ENCODE measurements at regions of chr16 and their contacts with region 1.

Region 1: DNA sequence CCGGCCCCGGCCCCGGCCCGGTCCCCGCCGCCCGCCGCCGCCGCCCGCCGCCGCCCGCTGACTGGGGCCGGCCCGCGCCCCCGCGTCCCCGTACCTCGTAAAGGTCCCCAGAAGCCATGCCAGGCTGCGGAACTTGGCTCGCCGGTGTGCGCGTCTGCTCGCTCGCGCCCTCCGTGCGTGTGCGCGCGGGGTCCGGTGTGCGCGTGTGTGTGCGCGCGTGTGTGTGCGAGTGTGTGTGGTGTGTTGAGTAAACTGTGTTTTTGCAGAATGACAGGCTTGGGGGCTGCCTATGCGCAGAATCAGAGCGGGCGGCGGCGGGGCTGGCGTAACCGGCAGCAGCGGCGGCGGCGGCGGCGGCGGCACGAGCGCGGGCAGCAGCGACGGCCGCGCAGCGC is 345 bp downstream of the CDYL2 start:
- DNase-seq: peak; percentile 51
- H3K4me3 ChIP-seq: peak overlapping the region; percentile 43 to 93 (median 50)
- H3K27ac ChIP-seq: peak overlapping the region; percentile 70
- H3K4me1 ChIP-seq: peaks cover 35% of the 10 kb centered on the region
- H3K27me3 ChIP-seq: no peaks in the 10 kb centered on the region
- CTCF ChIP-seq: no peak
- POLR2A ChIP-seq: no peak

Region 2: DNA sequence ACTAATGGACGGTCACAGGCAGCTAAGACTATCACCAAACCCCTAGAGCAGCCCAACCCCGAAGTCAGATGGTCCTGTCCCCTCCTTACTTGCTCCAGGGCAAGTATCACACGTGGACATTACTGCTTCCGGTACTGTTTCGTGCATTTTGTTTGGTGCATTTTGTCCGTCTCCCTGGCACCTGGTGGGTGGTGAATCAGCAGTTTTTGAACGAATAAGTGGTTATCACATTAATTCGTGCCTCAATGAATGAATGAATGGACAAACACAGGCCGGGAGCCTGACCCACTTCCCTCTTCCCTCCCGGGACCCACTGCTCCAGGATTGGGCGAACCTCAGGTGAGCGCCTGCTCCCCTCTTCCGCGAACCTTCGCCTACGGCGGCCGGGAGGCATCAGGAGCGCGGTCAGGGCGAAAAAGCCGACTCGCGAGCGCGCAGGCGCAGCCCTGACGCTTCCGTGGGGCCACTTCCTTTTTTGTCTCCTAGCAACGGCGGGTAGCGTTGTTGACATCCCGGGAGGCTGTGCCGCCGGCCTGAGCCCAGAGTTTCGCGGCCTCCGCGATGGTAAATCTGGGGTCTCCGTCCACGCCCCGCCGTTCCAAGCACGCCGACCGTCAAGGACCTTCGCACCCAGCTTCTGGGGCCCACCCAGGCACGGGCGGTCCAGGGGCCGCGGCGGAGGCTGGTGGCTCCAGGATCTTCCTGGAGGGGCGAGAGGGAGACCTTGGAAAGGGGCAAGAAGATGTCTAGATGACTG is 263.4 kb before region 1 on chr16 and contains the start of gene DYNLRB2:
- CTCF ChIA-PET with region 1: no interaction called
- POLR2A ChIA-PET with region 1: no interaction called
- dilution Hi-C with region 1: no loop called
- intact Hi-C with region 1: loop called (anchors 1 kb)
- DNase-seq: peak; percentile 89
- H3K4me3 ChIP-seq: peak within 1 kb of the TSS; percentile 55 to 84 (median 61)
- H3K27ac ChIP-seq: peak within 1 kb of the TSS; percentile 59
- H3K4me1 ChIP-seq: peaks cover 10% of the 10 kb centered on the region
- H3K27me3 ChIP-seq: peaks cover 2 to 22% of the 10 kb centered on the region in 2 experiments
- CTCF ChIP-seq: no peak
- POLR2A ChIP-seq: peak; percentile 66
- total RNA-seq, gene DYNLRB2: not detected in 2 replicates

Region 3: DNA sequence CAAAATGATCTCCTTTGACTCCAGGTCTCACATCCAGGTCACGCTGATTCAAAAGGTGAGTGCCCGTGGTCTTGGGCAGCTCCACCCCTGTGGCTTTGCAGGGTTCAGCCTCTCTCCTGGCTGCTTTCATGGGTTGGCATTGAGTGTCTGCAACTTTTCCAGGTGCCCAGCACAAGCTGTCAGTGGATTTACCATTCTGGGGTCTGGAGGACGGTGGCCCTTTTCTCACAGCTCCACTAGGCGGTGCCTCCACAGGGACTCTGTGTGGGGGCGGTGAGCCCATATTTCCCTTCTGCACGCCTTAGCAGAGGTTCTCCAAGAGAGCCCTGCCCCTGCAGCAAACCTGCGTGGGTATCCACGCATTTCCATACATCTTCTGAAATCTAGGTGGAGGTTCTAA is 160.8 kb before region 1 on chr16:
- CTCF ChIA-PET with region 1: no interaction called
- POLR2A ChIA-PET with region 1: no interaction called
- dilution Hi-C with region 1: no loop called
- intact Hi-C with region 1: no loop called
- DNase-seq: no peak
- H3K4me3 ChIP-seq: no peak overlapping the region
- H3K27ac ChIP-seq: no peak overlapping the region
- H3K4me1 ChIP-seq: no peaks in the 10 kb centered on the region
- H3K27me3 ChIP-seq: no peaks in the 10 kb centered on the region
- CTCF ChIP-seq: no peak
- POLR2A ChIP-seq: no peak

Region 4: GRCh38 chr16:80718249-80719220 is 85.5 kb before region 1 on chr16:
- CTCF ChIA-PET with region 1: no interaction called
- POLR2A ChIA-PET with region 1: no interaction called
- dilution Hi-C with region 1: no loop called
- intact Hi-C with region 1: loop called (anchors 2 kb)
- DNase-seq: peak; percentile 91
- H3K4me3 ChIP-seq: no peak overlapping the region
- H3K27ac ChIP-seq: peak overlapping the region; percentile 51
- H3K4me1 ChIP-seq: peaks cover 32% of the 10 kb centered on the region
- H3K27me3 ChIP-seq: no peaks in the 10 kb centered on the region
- CTCF ChIP-seq: no peak
- POLR2A ChIP-seq: no peak

Region 5: DNA sequence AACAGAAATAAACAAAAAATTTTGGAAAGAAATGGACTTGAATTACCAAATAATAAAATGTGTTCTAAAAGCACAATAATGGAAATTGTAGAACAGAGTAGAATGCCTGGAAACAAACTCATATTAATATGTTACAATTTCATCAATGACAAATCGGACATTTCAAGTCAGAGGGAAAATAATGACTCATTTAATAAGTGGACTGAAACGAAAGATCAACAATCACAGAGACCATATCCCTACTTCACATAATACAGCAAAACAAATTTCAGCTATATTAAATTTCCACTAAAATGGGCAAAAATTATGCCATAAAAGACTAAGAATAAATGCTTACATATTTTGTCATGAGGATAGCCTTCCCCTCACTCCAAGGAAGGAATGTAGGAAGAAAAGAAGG is 25.3 kb before region 1 on chr16:
- CTCF ChIA-PET with region 1: interaction called, 3 read pairs
- POLR2A ChIA-PET with region 1: no interaction called
- dilution Hi-C with region 1: no loop called
- intact Hi-C with region 1: loop called (anchors 2 kb)
- DNase-seq: peak; percentile 63
- H3K4me3 ChIP-seq: peak overlapping the region in 2 of 3 experiments; percentile 37 to 43
- H3K27ac ChIP-seq: peak overlapping the region; percentile 69
- H3K4me1 ChIP-seq: peaks cover 21% of the 10 kb centered on the region
- H3K27me3 ChIP-seq: no peaks in the 10 kb centered on the region
- CTCF ChIP-seq: no peak
- POLR2A ChIP-seq: no peak

Region 6: GRCh38 chr16:80931801-80932712 is 128.0 kb after region 1 on chr16:
- CTCF ChIA-PET with region 1: no interaction called
- POLR2A ChIA-PET with region 1: no interaction called
- dilution Hi-C with region 1: no loop called
- intact Hi-C with region 1: loop called (anchors 1 kb)
- DNase-seq: peak; percentile 59
- H3K4me3 ChIP-seq: peak overlapping the region; percentile 42 to 86 (median 63)
- H3K27ac ChIP-seq: peak overlapping the region; percentile 98
- H3K4me1 ChIP-seq: peaks cover 29% of the 10 kb centered on the region
- H3K27me3 ChIP-seq: no peaks in the 10 kb centered on the region
- CTCF ChIP-seq: peak; percentile 6 to 15
- POLR2A ChIP-seq: peak; percentile 83

Region 7: DNA sequence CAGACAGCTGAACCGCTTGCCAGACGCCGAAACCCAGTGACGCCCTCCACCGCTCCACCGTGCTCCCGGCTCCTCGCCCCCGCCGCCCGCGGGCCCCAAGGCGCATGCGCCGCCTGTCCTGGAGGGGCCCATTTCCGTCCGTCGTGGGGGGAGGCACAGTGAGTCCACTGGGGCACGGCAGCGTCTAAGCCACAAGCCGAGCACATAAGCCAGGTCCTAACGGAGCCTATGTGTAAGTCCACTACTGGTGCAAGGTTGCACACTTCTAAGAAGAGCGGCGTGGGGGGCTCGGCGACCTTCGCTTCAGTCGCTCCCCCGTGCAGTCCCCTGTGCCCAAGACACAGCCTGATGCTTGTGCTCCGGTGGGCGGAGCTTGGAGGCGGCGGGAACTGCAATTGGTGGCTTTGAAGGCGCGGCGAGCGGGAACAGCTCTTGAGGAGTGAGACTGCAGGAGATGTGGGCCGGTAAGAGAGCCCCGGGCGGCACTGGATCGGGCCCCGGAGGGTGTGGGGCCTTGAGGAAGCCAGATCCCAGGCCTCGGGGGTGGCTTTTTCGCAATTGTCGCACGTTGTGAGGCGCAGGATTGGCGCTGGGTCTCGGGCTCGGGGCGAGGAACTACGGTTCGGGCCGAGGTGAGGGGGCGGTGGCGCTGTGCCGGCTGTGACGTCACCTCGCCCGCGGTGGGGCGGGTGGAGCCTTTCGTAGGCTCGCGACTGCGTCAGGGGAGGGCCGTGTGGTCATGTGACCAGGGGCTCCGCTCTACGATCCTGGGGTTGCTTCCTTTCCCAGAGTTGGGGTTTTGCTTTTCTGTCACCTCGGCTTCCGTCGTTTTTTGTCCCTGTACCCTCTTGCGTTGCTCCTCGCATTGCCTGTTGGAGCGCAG is 203.0 kb after region 1 on chr16 and contains the starts of genes CENPN and CMC2:
- CTCF ChIA-PET with region 1: no interaction called
- POLR2A ChIA-PET with region 1: no interaction called
- dilution Hi-C with region 1: no loop called
- intact Hi-C with region 1: loop called (anchors 1 kb)
- DNase-seq: peak; percentile 99
- H3K4me3 ChIP-seq: peak within 1 kb of the TSS; percentile 72 to 87 (median 83)
- H3K27ac ChIP-seq: peak within 1 kb of the TSS; percentile 80
- H3K4me1 ChIP-seq: peaks cover 19% of the 10 kb centered on the region
- H3K27me3 ChIP-seq: no peaks in the 10 kb centered on the region
- CTCF ChIP-seq: peak in 1 of 2 donors; percentile 1
- POLR2A ChIP-seq: peak; percentile 84
- total RNA-seq, gene CENPN: 52.4 and 53.4 TPM in 2 replicates
- total RNA-seq, gene CMC2: 96.6 and 97.8 TPM in 2 replicates